Transverse colon (tissue), 4 donors: ENCODE measurements at regions of chr11 and their contacts with region 1.

Region 1: GRCh38 chr11:82867495-82868082 is 32.6 kb downstream of the PRCP start:
- DNase-seq: peak; percentile 75
- H3K4me3 ChIP-seq: peak overlapping the region in 1 of 4 donors; percentile 38
- H3K27ac ChIP-seq: no peak overlapping the region
- H3K4me1 ChIP-seq: peaks cover 0 to 38% (median 8%) of the 10 kb centered on the region in 4 donors
- H3K27me3 ChIP-seq: no peaks in the 10 kb centered on the region
- CTCF ChIP-seq: peak; percentile 71 to 78 (median 74)
- EP300 ChIP-seq: no peak
- POLR2A ChIP-seq: no peak

Region 2: DNA sequence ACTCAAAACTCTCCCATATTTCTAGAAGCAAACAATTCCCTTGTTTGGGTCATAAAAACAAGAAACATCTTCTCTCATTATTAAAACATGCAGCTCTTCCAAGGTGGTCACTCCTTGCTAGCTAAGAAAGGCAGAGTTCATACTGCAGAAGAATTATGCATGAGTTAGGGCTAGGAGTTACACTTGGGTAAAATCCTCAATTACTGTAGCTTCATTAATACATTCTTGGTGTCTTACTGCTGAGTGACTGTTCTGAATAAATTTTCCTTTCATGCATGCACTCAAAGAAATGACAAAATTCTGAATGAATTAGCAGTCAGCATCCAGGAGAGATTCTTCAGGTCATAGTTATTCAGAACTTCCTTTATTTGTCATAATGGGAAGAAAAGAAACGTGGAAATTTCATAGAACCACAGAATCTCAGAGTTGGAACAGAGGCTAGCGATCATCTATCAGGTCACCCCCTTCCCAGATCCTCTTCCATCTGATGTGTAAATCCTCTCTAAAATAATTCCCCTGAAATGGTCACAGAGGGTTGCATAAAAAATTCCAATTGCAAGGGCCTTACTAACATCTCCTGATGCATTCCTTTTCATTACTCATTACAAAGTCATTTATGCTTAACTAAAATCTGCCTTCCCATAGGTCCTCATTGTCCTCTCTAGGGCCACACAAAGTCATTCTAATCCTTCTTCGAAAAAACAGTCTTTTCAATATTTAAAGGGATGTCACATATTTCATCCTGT is 1988.1 kb after region 1 on chr11:
- in situ Hi-C with region 1: no loop called
- intact Hi-C with region 1: loop called (anchors 10 kb)
- DNase-seq: no peak
- H3K4me3 ChIP-seq: no peak overlapping the region
- H3K27ac ChIP-seq: no peak overlapping the region
- H3K4me1 ChIP-seq: no peaks in the 10 kb centered on the region
- H3K27me3 ChIP-seq: no peaks in the 10 kb centered on the region
- CTCF ChIP-seq: no peak
- EP300 ChIP-seq: no peak
- POLR2A ChIP-seq: no peak